ENCODE measurements at regions of chr6 and their contacts with region 1.

Region 1: GRCh38 chr6:31619805-31620585 is 520 bp upstream of the PRRC2A start:
- DNase-seq: peak; percentile 99 to 100 (median 99)
- H3K4me3 ChIP-seq: peak overlapping the region; percentile 29 to 95 (median 78)
- H3K27ac ChIP-seq: peak overlapping the region; percentile 94 to 97
- H3K4me1 ChIP-seq: peaks cover 25 to 54% (median 47%) of the 10 kb centered on the region in 4 experiments
- H3K27me3 ChIP-seq: no peaks in the 10 kb centered on the region

Region 2: DNA sequence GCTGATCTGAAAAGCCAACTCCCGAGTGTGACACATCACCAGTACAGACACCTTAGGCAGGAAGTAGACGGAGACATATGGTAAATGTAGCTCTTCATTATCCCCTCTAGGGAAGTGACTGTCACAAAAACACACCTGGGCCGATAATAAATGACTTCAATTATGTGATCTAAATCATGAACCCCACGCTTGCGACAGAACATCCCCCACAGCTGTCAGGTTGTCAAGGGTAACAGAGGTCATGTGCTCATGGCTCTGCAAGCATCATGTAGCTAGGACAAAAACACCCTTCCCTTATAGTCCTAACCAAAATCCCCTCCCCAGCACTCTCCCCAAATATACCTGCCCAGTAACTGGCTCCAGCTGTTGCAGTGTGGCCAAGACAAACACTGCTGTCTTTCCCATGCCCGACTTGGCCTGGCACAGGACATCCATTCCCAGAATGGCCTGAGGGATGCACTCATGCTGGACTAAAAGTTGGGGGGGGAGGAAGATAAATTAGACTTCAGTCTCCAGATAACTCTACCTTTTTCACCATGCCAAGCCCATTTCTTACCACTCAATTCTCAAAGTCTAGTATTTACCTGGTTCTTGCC is 81.1 kb before region 1 on chr6:
- CTCF ChIA-PET with region 1: no interaction called
- POLR2A ChIA-PET with region 1: no interaction called
- DNase-seq: no peak
- H3K4me3 ChIP-seq: peak overlapping the region in 2 of 7 experiments; percentile 6 to 97
- H3K27ac ChIP-seq: peak overlapping the region; percentile 44 to 100
- H3K4me1 ChIP-seq: peaks cover 17 to 39% (median 33%) of the 10 kb centered on the region in 4 experiments
- H3K27me3 ChIP-seq: no peaks in the 10 kb centered on the region

Region 3: DNA sequence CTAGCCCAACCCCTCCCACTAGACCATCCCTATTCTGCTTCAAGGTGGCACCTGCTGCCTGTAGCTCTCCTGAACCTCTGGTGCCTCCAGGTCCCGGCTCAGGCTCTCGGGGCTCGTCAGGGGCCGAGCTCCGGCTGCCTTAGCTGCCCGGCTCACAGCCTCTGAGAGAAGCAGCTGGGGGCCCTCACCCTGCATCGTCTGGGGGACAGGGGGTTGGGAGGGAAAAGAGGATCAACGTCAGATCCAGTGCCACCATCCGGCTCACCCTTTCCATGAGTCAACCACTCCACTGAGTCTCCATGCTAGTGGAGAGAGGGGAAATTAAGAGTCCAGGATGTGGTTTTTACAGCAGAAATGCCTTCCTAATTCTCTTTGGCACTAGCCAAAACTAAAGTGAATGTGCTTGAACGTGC is 19.5 kb after region 1 on chr6:
- CTCF ChIA-PET with region 1: interaction called, 15 read pairs
- POLR2A ChIA-PET with region 1: no interaction called
- DNase-seq: peak in 2 of 3 donors; percentile 46 to 52
- H3K4me3 ChIP-seq: no peak overlapping the region
- H3K27ac ChIP-seq: peak overlapping the region in 1 of 2 experiments; percentile 19
- H3K4me1 ChIP-seq: peaks cover 0 to 11% (median 3%) of the 10 kb centered on the region in 4 experiments
- H3K27me3 ChIP-seq: no peaks in the 10 kb centered on the region